AG04450 (cell line): ENCODE measurements at regions of chr1 and their contacts with region 1.

Region 1: GRCh38 chr1:26035959-26036755 is 9.8 kb downstream of the SLC30A2 start:
- DNase-seq: peak; percentile 23
- H3K4me3 ChIP-seq: peak overlapping the region; percentile 85
- H3K27ac ChIP-seq: no peak overlapping the region
- H3K27me3 ChIP-seq: peaks cover 12% of the 10 kb centered on the region
- CTCF ChIP-seq: peak; percentile 95

Region 2: GRCh38 chr1:25977801-25978200 is 58.4 kb before region 1 on chr1:
- CTCF ChIA-PET with region 1: no interaction called
- POLR2A ChIA-PET with region 1: no interaction called
- DNase-seq: no peak
- H3K4me3 ChIP-seq: no peak overlapping the region
- H3K27ac ChIP-seq: no peak overlapping the region
- H3K27me3 ChIP-seq: no peaks in the 10 kb centered on the region
- CTCF ChIP-seq: no peak

Region 3: DNA sequence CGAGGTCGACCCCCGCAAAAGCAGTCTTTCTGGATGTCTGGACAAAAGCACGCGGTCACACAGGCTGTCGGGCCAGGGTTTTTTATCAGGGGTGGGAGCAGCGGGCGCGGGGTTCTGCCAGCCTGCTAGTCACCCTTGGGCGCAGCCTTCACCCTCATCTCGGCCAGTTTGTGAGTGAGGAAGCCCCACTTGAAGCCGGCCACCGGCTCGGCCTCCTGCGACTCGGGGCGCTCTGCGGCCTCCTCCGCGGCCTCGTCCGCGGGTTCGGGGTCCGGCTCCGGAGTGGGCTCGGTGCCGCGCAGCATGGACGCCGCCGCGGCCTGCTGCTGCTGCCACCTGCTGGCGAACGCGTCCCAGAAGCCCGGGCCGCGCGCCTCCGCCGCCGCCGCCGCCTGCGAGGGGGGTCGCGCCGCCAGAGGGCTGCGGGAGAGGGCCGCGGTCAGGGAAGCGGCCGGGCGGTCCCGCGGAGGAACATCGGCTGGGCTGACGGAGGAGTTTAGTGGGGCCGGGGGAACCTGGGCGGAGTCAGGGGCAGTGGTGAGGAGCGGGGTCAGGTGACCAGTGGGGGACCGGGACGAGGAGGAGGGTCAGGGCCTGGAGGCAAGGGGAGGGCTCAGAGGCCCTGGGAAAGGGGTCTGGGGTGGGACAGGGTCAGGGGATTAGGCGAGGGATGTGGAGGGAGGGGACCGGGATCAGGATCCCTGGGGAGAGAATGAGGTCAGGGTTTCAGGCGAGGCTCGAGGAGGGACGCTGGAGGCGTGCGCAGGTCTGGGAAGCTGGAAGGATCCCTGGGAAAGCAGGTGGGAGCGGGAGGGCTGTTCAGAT is 128.1 kb after region 1 on chr1:
- CTCF ChIA-PET with region 1: interaction called, 13 read pairs
- POLR2A ChIA-PET with region 1: no interaction called
- DNase-seq: no peak
- H3K4me3 ChIP-seq: peak overlapping the region; percentile 40
- H3K27ac ChIP-seq: no peak overlapping the region
- H3K27me3 ChIP-seq: peaks cover 17% of the 10 kb centered on the region
- CTCF ChIP-seq: peak; percentile 24